CD4-positive, alpha-beta memory T cell (primary cell): ENCODE measurements at regions of chrX and their contacts with region 1.

Region 1: DNA sequence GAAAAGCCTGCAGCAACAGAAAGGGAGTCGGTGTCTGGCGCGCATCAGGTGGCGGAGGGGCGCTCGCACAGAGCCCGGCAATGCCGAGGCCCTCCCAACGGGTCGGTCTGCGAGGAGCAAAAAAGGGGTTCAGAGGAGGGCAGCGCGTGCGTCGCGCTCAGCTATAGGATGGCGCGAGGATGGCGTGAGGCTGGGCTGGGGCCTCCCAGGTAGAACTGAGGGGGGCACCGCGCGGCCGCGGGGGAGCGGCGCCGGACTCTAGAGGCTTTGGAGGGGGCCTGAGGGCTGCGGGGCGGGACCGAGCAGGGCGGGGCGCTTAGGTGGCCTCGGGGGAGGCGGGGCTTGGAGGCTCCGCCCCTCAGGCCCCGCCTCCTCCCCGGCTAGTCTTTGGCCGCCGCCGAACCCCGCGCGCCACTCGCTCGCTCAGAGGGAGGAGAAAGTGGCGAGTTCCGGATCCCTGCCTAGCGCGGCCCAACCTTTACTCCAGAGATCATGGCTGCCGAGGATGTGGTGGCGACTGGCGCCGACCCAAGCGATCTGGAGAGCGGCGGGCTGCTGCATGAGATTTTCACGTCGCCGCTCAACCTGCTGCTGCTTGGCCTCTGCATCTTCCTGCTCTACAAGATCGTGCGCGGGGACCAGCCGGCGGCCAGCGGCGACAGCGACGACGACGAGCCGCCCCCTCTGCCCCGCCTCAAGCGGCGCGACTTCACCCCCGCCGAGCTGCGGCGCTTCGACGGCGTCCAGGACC is at the start of gene PGRMC1:
- DNase-seq: peak; percentile 80 to 85 (median 84)
- H3K4me3 ChIP-seq: peak within 1 kb of the TSS; percentile 61 to 68
- H3K4me3 Mint-ChIP-seq: peak within 1 kb of the TSS; percentile 86 to 92 (median 90)
- H3K27ac ChIP-seq: peak within 1 kb of the TSS; percentile 52
- H3K27ac Mint-ChIP-seq: peak within 1 kb of the TSS; percentile 71 to 91 (median 83)
- H3K4me1 ChIP-seq: peaks cover 22% of the 10 kb centered on the region
- H3K4me1 Mint-ChIP-seq: peaks cover 9 to 38% (median 17%) of the 10 kb centered on the region in 4 donors
- H3K27me3 ChIP-seq: no peaks in the 10 kb centered on the region
- H3K27me3 Mint-ChIP-seq: no peaks in the 10 kb centered on the region
- total RNA-seq, gene PGRMC1: 15.9 to 17.2 TPM

Region 2: DNA sequence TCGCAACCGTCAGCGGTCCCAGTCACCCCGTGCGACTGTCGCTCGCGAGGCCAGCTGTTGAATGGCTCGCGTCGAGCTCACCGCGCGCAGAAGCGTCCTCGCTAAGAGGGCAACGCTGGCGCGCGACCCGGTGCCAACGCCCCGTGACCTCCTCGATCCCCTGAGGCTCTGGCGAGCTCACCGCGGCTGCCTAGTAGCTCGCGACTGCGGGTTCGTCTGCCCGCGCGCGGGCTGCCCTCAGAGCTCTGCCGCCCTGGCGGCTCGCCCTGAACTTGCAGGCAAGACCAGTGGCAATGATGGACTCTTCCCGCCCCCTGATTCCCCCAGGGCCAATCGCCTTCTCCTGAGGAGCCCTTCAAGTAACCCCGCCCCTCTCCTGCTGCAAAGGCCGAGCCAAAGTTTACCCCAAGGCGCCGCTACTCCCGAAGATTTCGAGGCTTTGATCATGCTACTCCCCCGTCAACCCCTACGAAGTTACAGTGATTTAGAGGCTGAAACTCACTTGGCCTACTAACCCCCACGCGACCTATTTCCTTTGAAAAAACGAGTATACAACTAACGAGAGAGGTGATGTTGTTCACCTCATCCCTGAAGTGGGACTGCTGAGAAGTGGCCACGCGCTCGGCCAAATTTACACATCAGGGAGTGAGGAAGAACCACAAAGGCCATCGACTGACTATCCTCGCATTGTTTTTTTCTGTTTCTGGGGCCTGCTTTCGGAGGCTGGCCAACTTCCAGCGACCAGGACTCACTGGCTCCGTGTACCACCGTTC is 37.6 kb after region 1 on chrX:
- CTCF ChIA-PET with region 1: interaction called, 3 read pairs
- POLR2A ChIA-PET with region 1: interaction called, 4 read pairs
- intact Hi-C with region 1: loop called (anchors 2 kb)
- DNase-seq: peak; percentile 42 to 65 (median 48)
- H3K4me3 ChIP-seq: peak overlapping the region in 1 of 2 donors; percentile 19
- H3K4me3 Mint-ChIP-seq: peak overlapping the region; percentile 74 to 85 (median 82)
- H3K27ac ChIP-seq: no peak overlapping the region
- H3K27ac Mint-ChIP-seq: peak overlapping the region in 5 of 7 donors; percentile 15 to 77 (median 55)
- H3K4me1 ChIP-seq: peaks cover 5% of the 10 kb centered on the region
- H3K4me1 Mint-ChIP-seq: peaks cover 2 to 9% (median 8%) of the 10 kb centered on the region in 4 donors
- H3K27me3 ChIP-seq: no peaks in the 10 kb centered on the region
- H3K27me3 Mint-ChIP-seq: peaks cover 7 to 18% of the 10 kb centered on the region in 2 donors

Region 3: DNA sequence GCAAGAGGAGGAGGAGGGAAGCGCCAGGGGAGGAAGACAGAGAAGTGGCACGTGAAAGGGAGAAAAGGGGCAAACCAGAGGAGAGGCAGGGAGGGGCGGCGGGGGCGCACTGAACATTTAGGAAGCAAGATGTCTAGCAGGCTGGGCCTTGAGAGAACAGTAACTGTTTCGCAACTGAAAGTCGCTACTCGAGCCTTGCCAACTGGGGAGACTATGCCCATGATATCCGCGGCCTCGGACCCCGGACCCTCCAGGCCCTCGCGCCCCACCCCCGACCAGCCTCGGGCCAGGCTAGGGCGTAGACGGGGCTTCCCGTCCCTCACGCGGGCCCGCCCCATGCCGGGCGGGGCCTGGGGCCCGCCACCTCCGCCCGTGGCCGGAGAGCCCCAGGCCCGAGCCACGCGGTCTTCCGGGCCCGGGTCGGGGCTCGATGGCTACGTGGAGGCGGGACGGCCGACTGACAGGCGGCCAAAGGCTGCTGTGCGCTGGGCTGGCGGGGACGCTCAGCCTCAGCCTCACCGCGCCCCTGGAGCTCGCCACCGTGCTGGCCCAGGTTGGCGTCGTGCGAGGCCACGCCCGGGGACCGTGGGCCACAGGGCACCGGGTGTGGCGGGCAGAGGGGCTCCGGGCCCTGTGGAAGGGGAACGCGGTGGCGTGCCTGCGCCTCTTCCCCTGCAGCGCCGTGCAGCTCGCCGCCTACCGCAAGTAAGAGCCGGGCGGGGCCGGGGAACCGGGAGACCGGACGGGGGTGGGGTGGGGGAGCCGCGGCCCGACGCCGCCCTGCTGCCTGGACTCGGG is 163.1 kb after region 1 on chrX and contains the start of gene SLC25A43:
- CTCF ChIA-PET with region 1: no interaction called
- POLR2A ChIA-PET with region 1: no interaction called
- intact Hi-C with region 1: loop called (anchors 5 kb)
- DNase-seq: peak; percentile 15 to 38 (median 22)
- H3K4me3 ChIP-seq: peak within 1 kb of the TSS in 1 of 2 donors; percentile 45
- H3K4me3 Mint-ChIP-seq: peak within 1 kb of the TSS; percentile 86 to 93 (median 88)
- H3K27ac ChIP-seq: peak within 1 kb of the TSS; percentile 47
- H3K27ac Mint-ChIP-seq: peak within 1 kb of the TSS; percentile 82 to 93 (median 92)
- H3K4me1 ChIP-seq: peaks cover 9% of the 10 kb centered on the region
- H3K4me1 Mint-ChIP-seq: peaks cover 8 to 21% (median 13%) of the 10 kb centered on the region in 4 donors
- H3K27me3 ChIP-seq: no peaks in the 10 kb centered on the region
- H3K27me3 Mint-ChIP-seq: no peaks in the 10 kb centered on the region
- total RNA-seq, gene SLC25A43: 4.1 to 4.2 TPM

Region 4: GRCh38 chrX:119655125-119655524 is 419.1 kb after region 1 on chrX:
- CTCF ChIA-PET with region 1: no interaction called
- POLR2A ChIA-PET with region 1: no interaction called
- intact Hi-C with region 1: no loop called
- DNase-seq: peak in 2 of 5 donors; percentile 41 to 79
- H3K4me3 ChIP-seq: no peak overlapping the region
- H3K4me3 Mint-ChIP-seq: peak overlapping the region in 5 of 8 donors; percentile 40 to 72 (median 59)
- H3K27ac ChIP-seq: peak overlapping the region; percentile 41
- H3K27ac Mint-ChIP-seq: peak overlapping the region; percentile 80 to 96 (median 91)
- H3K4me1 ChIP-seq: peaks cover 24% of the 10 kb centered on the region
- H3K4me1 Mint-ChIP-seq: peaks cover 26 to 50% (median 42%) of the 10 kb centered on the region in 4 donors
- H3K27me3 ChIP-seq: no peaks in the 10 kb centered on the region
- H3K27me3 Mint-ChIP-seq: no peaks in the 10 kb centered on the region